Gastrocnemius medialis (tissue), 4 donors: ENCODE measurements at regions of chr1 and their contacts with region 1.

Region 1: GRCh38 chr1:87328272-87329050 is at the start of gene LMO4:
- DNase-seq: peak; percentile 97
- ATAC-seq: peak; percentile 84 to 85
- H3K4me3 ChIP-seq: peak within 1 kb of the TSS; percentile 73 to 97 (median 92)
- H3K27ac ChIP-seq: peak within 1 kb of the TSS; percentile 88 to 99 (median 97)
- H3K4me1 ChIP-seq: peaks cover 23 to 24% of the 10 kb centered on the region in 2 donors
- H3K27me3 ChIP-seq: no peaks in the 10 kb centered on the region
- CTCF ChIP-seq: no peak
- POLR2A ChIP-seq: peak; percentile 89 to 94
- total RNA-seq, gene LMO4: 29.6 to 47.3 (median 35.8) TPM

Region 2: GRCh38 chr1:86395771-86396497 is 932.5 kb before region 1 on chr1 and contains the start of gene ODF2L:
- in situ Hi-C with region 1: no loop called
- intact Hi-C with region 1: loop called (anchors 10 kb)
- DNase-seq: peak; percentile 85
- ATAC-seq: peak; percentile 95 to 98
- H3K4me3 ChIP-seq: peak within 1 kb of the TSS; percentile 74 to 96 (median 86)
- H3K27ac ChIP-seq: peak within 1 kb of the TSS; percentile 64 to 73 (median 72)
- H3K4me1 ChIP-seq: peaks cover 0 to 6% of the 10 kb centered on the region in 2 donors
- H3K27me3 ChIP-seq: no peaks in the 10 kb centered on the region
- CTCF ChIP-seq: no peak
- POLR2A ChIP-seq: peak in 1 of 2 donors; percentile 66
- total RNA-seq, gene ODF2L: 1.7 to 5.4 (median 2.4) TPM

Region 3: DNA sequence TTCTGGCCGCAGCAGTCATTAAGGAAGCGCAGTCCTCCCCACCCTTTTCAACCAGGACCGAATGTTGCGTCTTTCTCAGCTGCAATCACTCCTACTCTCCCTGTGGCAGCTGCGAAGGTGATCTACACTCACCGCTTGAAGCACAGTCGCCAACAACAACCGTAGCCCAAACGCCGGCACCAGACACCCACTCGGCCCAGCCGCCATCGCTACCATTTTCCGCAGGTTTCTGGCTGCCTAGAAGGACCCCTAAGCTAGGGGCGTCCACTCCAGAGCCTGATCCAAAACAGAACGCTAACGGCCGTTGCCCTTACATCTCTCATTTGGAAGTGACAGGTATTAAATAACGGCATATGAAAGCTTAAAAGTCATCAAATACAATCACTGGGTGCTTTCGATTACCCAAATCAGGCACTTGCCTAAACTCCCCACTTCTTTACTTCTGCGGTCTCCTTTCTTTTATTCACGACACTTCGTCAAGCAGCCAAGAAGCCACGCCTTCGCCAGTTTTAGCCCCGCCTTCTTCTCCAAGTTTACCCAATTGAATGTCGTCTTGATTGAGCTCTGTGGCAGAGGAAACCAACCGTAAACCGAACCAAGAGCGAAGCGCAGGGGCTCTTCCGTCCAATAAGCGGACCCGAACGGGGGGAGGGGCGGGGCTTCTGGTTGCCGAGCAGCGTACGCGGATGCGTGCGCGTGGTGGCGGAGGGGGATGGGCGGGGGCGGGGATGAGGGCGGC is 414.4 kb before region 1 on chr1 and contains the start of gene SELENOF:
- in situ Hi-C with region 1: loop called in 1 of 4 experiments (anchors 25 kb)
- intact Hi-C with region 1: loop called (anchors 2 kb)
- DNase-seq: peak; percentile 98 to 100
- ATAC-seq: peak; percentile 97 to 98
- H3K4me3 ChIP-seq: peak within 1 kb of the TSS; percentile 76 to 99 (median 88)
- H3K27ac ChIP-seq: peak within 1 kb of the TSS; percentile 86 to 97 (median 90)
- H3K4me1 ChIP-seq: peaks cover 19 to 40% of the 10 kb centered on the region in 2 donors
- H3K27me3 ChIP-seq: no peaks in the 10 kb centered on the region
- CTCF ChIP-seq: peak in 1 of 5 experiments; percentile 23
- POLR2A ChIP-seq: peak; percentile 18 to 86
- total RNA-seq, gene SELENOF: 41.3 to 66.8 (median 47.2) TPM

Region 4: GRCh38 chr1:87953732-87954344 is 625.4 kb after region 1 on chr1:
- in situ Hi-C with region 1: loop called in 2 of 4 experiments (anchors 10 kb)
- intact Hi-C with region 1: loop called (anchors 2 kb)
- DNase-seq: peak; percentile 7 to 48
- ATAC-seq: peak; percentile 65 to 69
- H3K4me3 ChIP-seq: no peak overlapping the region
- H3K27ac ChIP-seq: no peak overlapping the region
- H3K4me1 ChIP-seq: no peaks in the 10 kb centered on the region
- H3K27me3 ChIP-seq: no peaks in the 10 kb centered on the region
- CTCF ChIP-seq: peak; percentile 30 to 69 (median 64)
- POLR2A ChIP-seq: no peak